ENCODE measurements at regions of chrX and their contacts with region 1.

Region 1: GRCh38 chrX:10310511-10310910 is 153.7 kb downstream of the CLCN4 start:
- ATAC-seq: peak in 1 of 8 experiments; percentile 26
- H3K4me3 ChIP-seq: no peak overlapping the region
- H3K27ac ChIP-seq: peak overlapping the region in 1 of 2 donors; percentile 33
- H3K4me1 ChIP-seq: peaks cover 7 to 8% of the 10 kb centered on the region in 2 donors

Region 2: GRCh38 chrX:10259716-10260115 is 50.8 kb before region 1 on chrX:
- in situ Hi-C with region 1: loop called in 1 of 9 experiments (anchors 10 kb)
- ATAC-seq: no peak
- H3K4me3 ChIP-seq: no peak overlapping the region
- H3K27ac ChIP-seq: no peak overlapping the region
- H3K4me1 ChIP-seq: no peaks in the 10 kb centered on the region